ENCODE measurements at regions of chr12 and their contacts with region 1.

Region 1: GRCh38 chr12:53219968-53220800 is 11.8 kb downstream of the RARG start:
- DNase-seq: peak; percentile 89
- ATAC-seq: peak; percentile 42

Region 2: GRCh38 chr12:52813885-52814711 is 406.1 kb before region 1 on chr12 and contains the start of gene KRT4:
- intact Hi-C with region 1: no loop called
- DNase-seq: no peak
- ATAC-seq: peak; percentile 45
- total RNA-seq, gene KRT4: not detected

Region 3: GRCh38 chr12:53251477-53252348 is 31.5 kb after region 1 on chr12:
- intact Hi-C with region 1: loop called (anchors 5 kb)
- DNase-seq: peak; percentile 88
- ATAC-seq: peak; percentile 96

Measured in Right ventricle myocardium superior (tissue), 1 donor.